Cardiac septum (tissue), 1 donor: ENCODE measurements at regions of chr18 and their contacts with region 1.

Region 1: DNA sequence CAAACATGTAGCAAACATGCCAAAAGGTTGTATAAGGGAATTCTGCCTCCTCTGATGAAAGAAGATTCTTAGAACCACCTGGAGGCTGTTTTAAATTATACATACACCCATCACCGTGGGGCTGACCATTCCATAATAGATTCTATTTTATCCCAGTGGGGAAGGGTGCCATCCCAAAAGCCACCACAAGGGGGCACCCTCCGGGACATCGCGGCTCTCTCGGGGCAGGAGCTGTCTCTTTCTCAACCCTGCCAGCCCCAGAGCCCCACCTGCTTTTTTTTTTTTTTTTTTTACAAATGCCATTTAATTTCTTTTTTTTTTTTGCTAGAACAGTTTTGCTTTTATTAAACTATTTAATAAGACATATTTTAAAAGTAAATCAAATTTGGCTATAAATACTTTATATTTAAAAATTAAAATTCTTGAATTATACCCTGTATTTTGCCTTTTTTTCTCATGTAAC is 8.6 kb upstream of the MTCL1 start:
- DNase-seq: no peak

Region 2: DNA sequence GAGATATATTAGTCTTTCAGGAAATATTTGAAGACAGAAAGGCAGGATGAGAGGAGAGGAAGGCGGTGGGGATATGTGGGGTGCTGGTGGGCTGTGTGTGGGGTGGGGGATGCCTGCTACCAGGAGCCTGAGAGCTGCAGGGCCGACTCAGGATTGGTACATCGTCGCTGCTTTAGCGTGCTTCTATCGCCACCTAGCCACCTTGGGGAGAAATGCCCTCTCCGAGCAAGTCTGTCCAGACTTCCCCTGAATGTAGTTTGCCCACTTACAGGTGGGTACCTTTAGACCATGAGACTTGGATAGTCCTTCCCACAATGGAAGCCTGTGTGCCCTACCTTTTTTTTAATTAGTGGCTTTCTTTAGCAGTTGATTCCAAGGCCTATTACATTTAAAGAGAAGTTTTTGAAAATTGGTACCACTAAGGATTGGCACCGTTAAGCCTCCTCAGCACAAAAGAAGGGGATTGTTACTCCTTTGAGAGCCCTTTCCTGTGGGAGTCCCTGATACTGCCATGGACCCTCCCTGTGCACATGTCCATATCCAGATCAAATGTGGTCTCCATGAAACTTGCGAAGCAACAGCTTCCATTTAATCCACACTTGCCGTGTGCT is 291.6 kb after region 1 on chr18:
- intact Hi-C with region 1: loop called (anchors 2 kb)
- DNase-seq: no peak

Region 3: DNA sequence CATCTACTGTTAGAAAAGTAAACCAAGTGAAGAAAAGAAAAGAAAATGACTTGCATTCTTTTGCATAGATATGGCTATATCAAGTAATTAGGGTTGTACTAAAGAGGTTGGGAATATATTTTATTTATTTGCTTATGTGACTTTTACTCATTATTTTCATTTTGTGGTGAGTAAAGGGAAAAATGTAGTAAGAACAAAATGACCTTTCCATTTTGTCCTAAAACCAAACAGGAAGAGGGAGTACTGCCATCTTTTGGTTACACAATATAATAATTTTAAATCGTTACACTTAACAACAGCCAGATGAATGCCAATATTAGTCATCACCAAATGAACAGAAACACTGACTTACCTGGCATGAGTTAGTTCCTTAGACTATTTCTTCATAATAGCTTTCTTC is 358.4 kb after region 1 on chr18:
- intact Hi-C with region 1: loop called (anchors 10 kb)
- DNase-seq: no peak

Region 4: GRCh38 chr18:9428301-9428706 is 731.5 kb after region 1 on chr18:
- intact Hi-C with region 1: no loop called
- DNase-seq: no peak